SK-N-SH (cell line): ENCODE measurements at regions of chr7 and their contacts with region 1.

Region 1: GRCh38 chr7:129376076-129376777 is 58.0 kb upstream of the STRIP2 start:
- DNase-seq: peak; percentile 52
- H3K4me3 ChIP-seq: no peak overlapping the region
- H3K27ac ChIP-seq: no peak overlapping the region
- H3K4me1 ChIP-seq: no peaks in the 10 kb centered on the region
- H3K27me3 ChIP-seq: no peaks in the 10 kb centered on the region
- CTCF ChIP-seq: peak; percentile 74
- EP300 ChIP-seq: no peak
- RAD21 ChIP-seq: peak; percentile 49

Region 2: DNA sequence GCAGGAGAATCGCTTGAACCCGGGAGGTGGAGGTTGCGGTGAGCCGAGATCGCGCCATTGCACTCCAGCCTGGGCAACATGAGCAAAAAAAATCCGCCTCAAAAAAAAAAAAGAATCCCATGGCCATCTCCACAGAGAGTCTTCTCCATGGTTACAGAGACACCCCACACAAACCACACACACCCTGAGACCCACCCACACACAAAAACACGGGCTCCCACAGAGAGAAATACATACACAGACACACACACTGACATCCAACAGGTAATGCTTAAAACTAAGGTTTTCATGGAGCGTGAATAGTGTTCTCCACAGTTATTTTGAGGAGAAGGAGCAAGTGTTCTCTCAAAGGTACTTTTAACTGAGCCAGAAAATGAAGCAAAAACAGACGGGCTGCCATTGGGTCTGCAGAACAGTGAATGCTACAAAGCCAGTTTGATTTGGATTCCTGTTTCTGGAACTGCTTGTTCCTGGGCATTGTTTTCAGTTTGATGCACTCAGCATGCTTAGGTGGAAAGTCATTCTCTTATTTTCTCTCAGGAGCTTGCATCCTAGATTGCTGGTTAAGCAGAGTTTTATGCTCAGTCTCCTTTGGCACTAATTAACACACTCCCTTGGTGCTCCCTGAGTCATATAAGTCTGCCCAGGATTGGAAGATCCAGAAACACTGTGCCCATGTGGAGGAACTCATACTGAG is 136.0 kb before region 1 on chr7:
- CTCF ChIA-PET with region 1: no interaction called
- POLR2A ChIA-PET with region 1: no interaction called
- DNase-seq: no peak
- H3K4me3 ChIP-seq: no peak overlapping the region
- H3K27ac ChIP-seq: no peak overlapping the region
- H3K4me1 ChIP-seq: no peaks in the 10 kb centered on the region
- H3K27me3 ChIP-seq: no peaks in the 10 kb centered on the region
- CTCF ChIP-seq: no peak
- EP300 ChIP-seq: no peak
- RAD21 ChIP-seq: no peak

Region 3: DNA sequence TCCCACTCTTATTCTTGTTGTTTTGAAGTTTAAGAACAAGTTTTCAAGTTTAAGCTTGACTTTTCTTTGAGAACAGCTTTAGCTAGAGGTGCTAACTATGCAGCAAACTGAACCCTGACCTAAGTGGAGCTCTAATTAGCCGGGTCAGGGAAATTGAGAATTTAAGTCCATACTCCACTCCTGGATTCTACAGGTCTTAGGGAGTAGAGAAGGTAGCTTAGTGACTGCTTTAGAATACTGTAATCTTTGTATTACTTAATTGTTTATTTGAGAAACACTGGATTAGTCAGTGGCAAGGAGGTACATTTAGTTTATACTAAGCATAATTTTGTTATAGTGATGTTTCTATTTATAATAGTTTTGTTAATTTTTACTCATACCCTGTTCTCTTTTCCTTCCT is 16.6 kb before region 1 on chr7:
- CTCF ChIA-PET with region 1: interaction called, 105 read pairs
- POLR2A ChIA-PET with region 1: no interaction called
- DNase-seq: no peak
- H3K4me3 ChIP-seq: no peak overlapping the region
- H3K27ac ChIP-seq: no peak overlapping the region
- H3K4me1 ChIP-seq: no peaks in the 10 kb centered on the region
- H3K27me3 ChIP-seq: no peaks in the 10 kb centered on the region
- CTCF ChIP-seq: no peak
- EP300 ChIP-seq: no peak
- RAD21 ChIP-seq: no peak

Region 4: GRCh38 chr7:129389829-129390228 is 13.6 kb after region 1 on chr7:
- CTCF ChIA-PET with region 1: interaction called, 67 read pairs
- POLR2A ChIA-PET with region 1: no interaction called
- DNase-seq: no peak
- H3K4me3 ChIP-seq: no peak overlapping the region
- H3K27ac ChIP-seq: no peak overlapping the region
- H3K4me1 ChIP-seq: no peaks in the 10 kb centered on the region; a peak in 1 of 4 replicates
- H3K27me3 ChIP-seq: no peaks in the 10 kb centered on the region
- CTCF ChIP-seq: no peak; the same call in none of the 2 replicates
- EP300 ChIP-seq: no peak
- RAD21 ChIP-seq: no peak

Region 5: GRCh38 chr7:129401967-129402860 is 26.0 kb after region 1 on chr7:
- CTCF ChIA-PET with region 1: interaction called, 24 read pairs
- POLR2A ChIA-PET with region 1: no interaction called
- DNase-seq: no peak
- H3K4me3 ChIP-seq: no peak overlapping the region
- H3K27ac ChIP-seq: no peak overlapping the region
- H3K4me1 ChIP-seq: no peaks in the 10 kb centered on the region; a peak in 1 of 4 replicates
- H3K27me3 ChIP-seq: no peaks in the 10 kb centered on the region
- CTCF ChIP-seq: peak; percentile 15; the same call in 1 of the 2 replicates
- EP300 ChIP-seq: no peak
- RAD21 ChIP-seq: peak; percentile 36

Region 6: DNA sequence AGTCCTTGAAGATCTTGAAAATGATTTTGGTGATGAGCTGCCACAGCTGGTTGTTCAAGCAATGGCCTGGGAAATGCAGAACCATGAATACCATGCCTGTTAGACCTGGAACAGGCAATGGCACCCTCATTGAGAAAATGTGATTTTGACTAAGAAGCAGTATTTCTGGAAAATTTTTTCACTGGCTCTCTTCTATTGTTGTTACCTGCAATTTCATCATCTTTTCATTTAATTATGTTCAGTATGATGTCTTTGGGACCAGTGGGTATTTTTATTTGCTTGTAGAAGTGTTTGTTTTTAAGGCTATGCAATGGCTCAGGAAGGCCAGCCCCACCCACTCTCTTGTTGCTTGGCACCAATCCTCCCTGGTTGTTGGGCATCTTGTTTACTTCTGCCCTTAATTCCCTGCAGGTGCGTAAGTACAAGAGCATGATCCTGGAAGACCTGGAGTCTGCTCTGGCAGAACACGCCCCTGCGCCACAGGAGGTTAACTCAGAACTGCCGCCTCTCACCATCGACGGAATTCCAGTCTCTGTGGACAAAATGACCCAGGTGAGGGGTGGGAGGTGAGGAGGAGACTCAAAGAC is 313.9 kb after region 1 on chr7:
- CTCF ChIA-PET with region 1: no interaction called
- POLR2A ChIA-PET with region 1: no interaction called
- DNase-seq: no peak
- H3K4me3 ChIP-seq: no peak overlapping the region
- H3K27ac ChIP-seq: no peak overlapping the region
- H3K4me1 ChIP-seq: 0 out of 4 replicates have a peak, but pooled peaks cover 0 to 3% of the 10 kb centered on the region in 2 experiments
- H3K27me3 ChIP-seq: no peaks in the 10 kb centered on the region
- CTCF ChIP-seq: no peak
- EP300 ChIP-seq: no peak
- RAD21 ChIP-seq: no peak